WTC11 (cell line): ENCODE measurements at regions of chr4 and their contacts with region 1.

Region 1: DNA sequence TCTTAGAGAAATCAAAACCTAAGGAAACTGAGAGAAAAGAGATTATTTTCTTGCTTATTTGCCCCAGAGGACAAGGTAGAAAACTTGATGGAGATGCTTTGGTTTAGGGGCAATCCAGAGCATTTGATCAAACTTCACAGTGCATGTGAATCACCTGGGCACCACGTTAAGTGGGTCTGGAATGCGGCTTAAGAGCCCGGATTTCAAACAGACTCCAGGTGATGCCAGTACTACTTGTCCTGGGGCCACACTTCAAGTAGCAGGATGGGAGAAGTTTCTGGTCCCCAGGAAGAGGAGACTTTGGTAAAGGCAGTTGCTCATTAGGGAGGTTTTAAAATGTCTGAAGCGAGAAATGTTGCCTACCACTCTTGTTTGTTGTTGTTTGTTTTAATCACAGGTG is 51.8 kb downstream of the PHOX2B start:
- DNase-seq: no peak
- ATAC-seq: peak; percentile 49
- H3K4me3 Mint-ChIP-seq: no peak overlapping the region
- H3K27ac Mint-ChIP-seq: no peak overlapping the region
- H3K4me1 Mint-ChIP-seq: peaks cover 9% of the 10 kb centered on the region
- H3K27me3 Mint-ChIP-seq: peaks cover 10% of the 10 kb centered on the region
- CTCF ChIP-seq: no peak

Region 2: GRCh38 chr4:41853973-41854372 is 157.2 kb after region 1 on chr4:
- CTCF ChIA-PET with region 1: no interaction called
- POLR2A ChIA-PET with region 1: no interaction called
- DNase-seq: no peak
- ATAC-seq: no peak
- H3K4me3 Mint-ChIP-seq: no peak overlapping the region
- H3K27ac Mint-ChIP-seq: no peak overlapping the region
- H3K4me1 Mint-ChIP-seq: no peaks in the 10 kb centered on the region
- H3K27me3 Mint-ChIP-seq: peaks cover 42% of the 10 kb centered on the region
- CTCF ChIP-seq: no peak

Region 3: GRCh38 chr4:41887821-41888686 is 191.3 kb after region 1 on chr4:
- CTCF ChIA-PET with region 1: interaction called, 11 read pairs
- POLR2A ChIA-PET with region 1: no interaction called
- DNase-seq: peak; percentile 38
- ATAC-seq: no peak
- H3K4me3 Mint-ChIP-seq: no peak overlapping the region
- H3K27ac Mint-ChIP-seq: no peak overlapping the region
- H3K4me1 Mint-ChIP-seq: peaks cover 4% of the 10 kb centered on the region; the same call in 1 of the 2 replicates
- H3K27me3 Mint-ChIP-seq: peaks cover 55% of the 10 kb centered on the region
- CTCF ChIP-seq: peak; percentile 78